ENCODE measurements at regions of chr10 and their contacts with region 1.

Region 1: DNA sequence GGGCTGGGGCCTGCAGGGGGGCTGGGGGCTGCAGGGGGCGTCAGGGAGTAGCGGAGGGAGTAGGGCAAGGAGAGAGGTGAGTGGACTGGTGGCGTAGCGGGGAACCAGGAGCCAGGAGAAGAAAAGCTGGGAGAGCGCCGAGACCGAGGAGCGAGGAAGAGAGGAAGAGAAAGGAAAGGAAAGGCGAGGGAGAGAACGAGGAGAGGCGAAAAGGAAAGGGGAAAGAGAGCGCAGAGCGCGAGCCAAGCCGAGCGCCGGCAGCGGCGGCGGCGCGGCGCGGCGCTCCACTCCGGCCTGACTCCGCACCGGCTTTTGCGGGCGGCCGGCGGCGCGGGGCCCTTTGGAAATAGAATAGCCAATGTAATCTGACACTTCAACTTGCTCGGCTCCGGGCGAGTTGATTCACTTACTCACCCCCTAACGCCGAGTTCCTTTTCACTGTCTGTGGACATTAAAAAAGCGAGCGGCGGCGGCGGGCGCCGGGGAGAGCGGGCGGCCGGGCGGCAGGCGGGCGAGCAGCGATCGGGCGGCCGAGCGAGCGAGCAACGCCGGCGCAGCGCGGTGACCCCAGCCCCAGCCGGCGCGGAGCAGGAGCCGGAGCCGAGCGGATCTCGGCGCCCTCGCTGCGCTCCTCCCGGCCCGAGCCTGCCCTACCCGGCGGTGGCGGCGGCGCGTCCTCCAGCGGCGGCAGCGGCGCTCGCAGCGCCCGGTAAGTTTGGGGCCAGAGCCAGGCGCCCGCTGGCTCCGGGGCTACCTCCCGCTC is at the start of gene ZMIZ1:
- DNase-seq: peak; percentile 91 to 95 (median 94)
- ATAC-seq: peak; percentile 15 to 22
- H3K4me3 ChIP-seq: peak within 1 kb of the TSS; percentile 77
- H3K27ac ChIP-seq: peak within 1 kb of the TSS; percentile 95
- H3K4me1 ChIP-seq: peaks cover 16% of the 10 kb centered on the region
- H3K27me3 ChIP-seq: no peaks in the 10 kb centered on the region
- total RNA-seq, gene ZMIZ1: 67.4 to 83.1 (median 72.9) TPM

Region 2: DNA sequence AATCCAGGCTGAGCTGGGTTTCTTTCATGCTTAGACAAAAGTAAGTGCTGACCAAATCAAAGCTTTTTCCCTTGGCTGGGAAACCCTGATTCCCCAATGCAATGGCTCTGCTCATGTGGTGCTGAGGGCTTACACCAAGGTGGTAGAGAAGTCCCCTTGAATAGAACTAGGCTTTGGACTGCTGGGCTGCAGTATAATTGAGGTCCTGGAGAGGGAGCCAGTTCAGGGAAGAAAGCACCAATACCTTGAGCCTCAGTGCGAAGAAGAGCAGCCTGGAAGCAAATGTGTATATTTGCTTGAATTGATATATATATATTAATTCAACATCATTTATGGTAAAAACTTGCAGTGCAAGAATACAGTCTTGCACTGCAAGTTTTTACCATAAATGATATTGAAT is 644.0 kb before region 1 on chr10:
- intact Hi-C with region 1: loop called in 1 of 4 experiments (anchors 10 kb)
- DNase-seq: no peak
- ATAC-seq: no peak
- H3K4me3 ChIP-seq: no peak overlapping the region
- H3K27ac ChIP-seq: no peak overlapping the region
- H3K4me1 ChIP-seq: no peaks in the 10 kb centered on the region
- H3K27me3 ChIP-seq: no peaks in the 10 kb centered on the region

Region 3: GRCh38 chr10:78777466-78777865 is 291.3 kb before region 1 on chr10:
- intact Hi-C with region 1: loop called in 1 of 4 experiments (anchors 10 kb)
- DNase-seq: peak; percentile 74 to 91 (median 89)
- ATAC-seq: peak; percentile 83 to 88
- H3K4me3 ChIP-seq: no peak overlapping the region
- H3K27ac ChIP-seq: peak overlapping the region; percentile 65
- H3K4me1 ChIP-seq: peaks cover 6% of the 10 kb centered on the region
- H3K27me3 ChIP-seq: no peaks in the 10 kb centered on the region

Region 4: GRCh38 chr10:78972947-78973900 is 95.5 kb before region 1 on chr10:
- intact Hi-C with region 1: loop called (anchors 5 to 10 kb)
- DNase-seq: peak; percentile 86 to 94 (median 93)
- ATAC-seq: peak; percentile 76 to 81
- H3K4me3 ChIP-seq: peak overlapping the region; percentile 53
- H3K27ac ChIP-seq: peak overlapping the region; percentile 100
- H3K4me1 ChIP-seq: no peaks in the 10 kb centered on the region
- H3K27me3 ChIP-seq: no peaks in the 10 kb centered on the region

Region 5: DNA sequence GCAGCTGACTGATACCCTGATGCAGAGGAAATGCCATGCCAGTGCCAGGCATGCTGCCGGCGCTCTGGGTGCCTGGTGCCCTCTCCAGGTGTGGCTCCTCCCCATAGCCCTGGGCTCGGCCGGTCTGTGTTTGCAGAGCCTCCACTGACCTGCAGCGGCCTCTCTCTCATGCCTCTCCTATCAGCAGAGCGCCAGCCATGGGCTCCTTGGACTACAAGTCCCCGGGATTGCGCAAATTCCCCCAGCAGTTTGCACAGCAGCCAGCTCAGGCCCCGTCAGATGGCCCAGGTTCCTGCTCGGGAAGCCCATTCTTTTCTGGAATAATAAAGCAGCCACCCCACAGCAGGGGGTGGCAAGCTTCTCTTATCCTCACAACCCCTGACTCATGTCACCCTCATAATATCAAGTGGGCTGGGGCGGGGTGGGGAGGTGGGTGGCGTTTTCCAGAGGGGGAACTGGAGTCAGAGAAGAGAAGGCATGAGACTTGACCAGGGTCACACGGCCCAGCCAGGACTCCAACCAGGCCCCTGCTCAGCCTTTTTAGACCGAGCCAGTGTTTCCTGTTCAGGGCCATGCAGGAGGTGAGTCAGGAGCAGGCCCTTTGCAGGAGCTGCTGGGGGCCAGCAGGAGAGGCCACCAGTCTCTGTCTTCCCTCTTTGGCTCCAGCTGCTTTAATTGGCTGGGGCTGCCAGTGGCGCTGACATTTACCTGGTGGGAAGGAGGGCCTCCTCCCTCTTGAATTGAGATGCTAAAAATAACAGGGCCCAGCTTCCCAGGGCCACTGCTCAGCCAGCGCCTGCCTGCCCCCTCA is 58.6 kb after region 1 on chr10:
- intact Hi-C with region 1: loop called in 1 of 4 experiments (anchors 10 kb)
- DNase-seq: peak; percentile 84 to 91 (median 89)
- ATAC-seq: peak; percentile 53 to 67
- H3K4me3 ChIP-seq: no peak overlapping the region
- H3K27ac ChIP-seq: peak overlapping the region; percentile 37
- H3K4me1 ChIP-seq: peaks cover 49% of the 10 kb centered on the region
- H3K27me3 ChIP-seq: no peaks in the 10 kb centered on the region

Region 6: DNA sequence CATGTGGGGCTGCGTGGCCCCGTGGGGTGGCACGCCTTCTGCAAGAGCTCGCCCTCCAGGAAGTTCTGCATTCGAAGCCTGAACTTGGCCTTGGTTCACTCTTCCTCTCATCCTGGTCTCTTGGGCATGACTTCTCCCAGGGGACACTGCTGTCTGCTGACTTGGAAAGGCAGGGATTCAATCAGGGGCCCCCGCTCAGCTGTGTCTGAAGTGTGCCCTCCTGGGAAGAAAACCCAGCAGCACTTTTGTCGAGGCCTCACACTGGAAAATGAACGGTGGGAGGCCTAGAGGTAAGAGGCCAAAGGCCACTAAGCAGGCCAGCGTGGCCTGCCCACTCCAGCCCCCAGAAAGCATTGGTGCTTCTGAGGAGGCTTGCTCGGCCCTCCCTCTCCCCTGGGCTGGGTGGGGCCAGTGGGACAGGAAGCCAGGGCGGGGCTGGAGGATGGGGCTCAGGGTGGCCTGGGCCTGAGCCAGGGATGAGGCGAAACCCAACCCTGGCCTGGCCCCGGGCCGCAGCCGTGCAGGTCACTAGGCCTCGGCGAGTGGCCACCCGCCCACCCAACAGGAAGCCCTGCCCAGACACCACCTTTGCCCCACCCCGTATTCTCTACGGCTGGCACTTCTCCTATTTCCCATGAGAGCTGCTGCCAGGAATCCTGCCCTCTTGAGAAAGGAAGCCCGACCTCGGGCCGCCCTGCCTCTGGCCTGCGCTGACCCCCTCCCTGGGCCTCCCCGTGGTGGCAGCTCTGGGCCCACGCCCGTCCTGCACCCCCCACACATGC is 81.1 kb after region 1 on chr10:
- intact Hi-C with region 1: loop called in 3 of 4 experiments (anchors 5 to 10 kb)
- DNase-seq: peak; percentile 94 to 96 (median 95)
- ATAC-seq: peak; percentile 62 to 76
- H3K4me3 ChIP-seq: no peak overlapping the region
- H3K27ac ChIP-seq: peak overlapping the region; percentile 97
- H3K4me1 ChIP-seq: peaks cover 77% of the 10 kb centered on the region
- H3K27me3 ChIP-seq: no peaks in the 10 kb centered on the region

Region 7: GRCh38 chr10:79165070-79165778 is 96.5 kb after region 1 on chr10:
- intact Hi-C with region 1: no loop called
- DNase-seq: no peak
- ATAC-seq: no peak
- H3K4me3 ChIP-seq: no peak overlapping the region
- H3K27ac ChIP-seq: peak overlapping the region; percentile 86
- H3K4me1 ChIP-seq: peaks cover 14% of the 10 kb centered on the region
- H3K27me3 ChIP-seq: no peaks in the 10 kb centered on the region

Region 8: DNA sequence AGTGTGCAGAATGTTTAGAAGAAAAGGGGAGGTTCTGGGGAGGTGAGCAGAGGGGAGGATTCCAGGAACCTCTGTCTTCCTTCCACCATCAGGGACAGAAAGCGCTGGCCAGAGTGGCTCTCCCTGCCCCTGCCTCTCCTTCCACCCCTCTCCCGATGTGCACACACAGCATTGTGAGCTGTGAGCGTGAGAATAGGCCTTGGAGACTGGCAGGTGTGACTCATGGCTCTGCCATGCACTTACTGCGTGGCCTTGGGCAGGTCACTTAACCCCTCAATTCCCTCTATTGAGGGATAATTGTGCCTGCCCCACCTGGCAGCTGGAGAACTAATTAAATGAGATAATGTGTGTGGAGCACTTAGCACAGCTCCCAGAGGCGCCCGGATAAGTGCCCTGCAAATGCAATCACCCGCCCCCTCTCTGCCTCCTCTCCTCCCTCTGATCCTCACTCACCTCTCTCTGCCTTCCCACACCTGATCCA is 115.4 kb after region 1 on chr10:
- intact Hi-C with region 1: loop called in 1 of 4 experiments (anchors 10 kb)
- DNase-seq: peak in 1 of 3 donors; percentile 54
- ATAC-seq: peak in 1 of 2 donors; percentile 28
- H3K4me3 ChIP-seq: no peak overlapping the region
- H3K27ac ChIP-seq: peak overlapping the region; percentile 75
- H3K4me1 ChIP-seq: peaks cover 51% of the 10 kb centered on the region
- H3K27me3 ChIP-seq: no peaks in the 10 kb centered on the region

Measured in right cardiac atrium (tissue), 5 donors.